ENCODE measurements at regions of chr3 and their contacts with region 1.

Region 1: GRCh38 chr3:128297401-128298138 is 144.3 kb downstream of the EEFSEC start:
- DNase-seq: peak in 3 of 4 donors; percentile 54 to 64 (median 55)
- ATAC-seq: peak; percentile 42
- H3K4me3 ChIP-seq: no peak overlapping the region
- H3K27ac ChIP-seq: no peak overlapping the region
- H3K4me1 ChIP-seq: no peaks in the 10 kb centered on the region
- H3K27me3 ChIP-seq: no peaks in the 10 kb centered on the region
- CTCF ChIP-seq: no peak
- POLR2A ChIP-seq: no peak

Region 2: DNA sequence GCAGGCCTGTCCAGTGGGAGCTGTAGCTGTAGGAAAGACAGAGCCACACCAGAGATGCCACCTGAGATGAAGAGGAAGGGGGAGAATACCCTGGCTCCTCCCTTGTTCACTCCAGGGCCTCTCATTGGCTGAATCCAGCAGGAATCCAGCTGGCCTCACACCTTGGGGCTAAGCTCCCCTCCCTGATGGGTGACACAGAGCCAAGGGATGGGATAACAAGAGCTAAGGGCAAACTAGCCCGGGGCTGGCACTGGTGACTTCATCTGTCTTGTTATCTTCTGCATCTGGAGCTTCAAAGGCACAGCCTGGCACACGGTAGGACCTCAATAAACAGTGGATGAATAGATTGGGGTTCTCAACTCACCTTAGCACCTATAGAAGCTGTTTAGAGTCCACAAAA is 209.2 kb after region 1 on chr3:
- intact Hi-C with region 1: no loop called
- DNase-seq: no peak
- ATAC-seq: no peak
- H3K4me3 ChIP-seq: no peak overlapping the region
- H3K27ac ChIP-seq: no peak overlapping the region
- H3K4me1 ChIP-seq: no peaks in the 10 kb centered on the region
- H3K27me3 ChIP-seq: no peaks in the 10 kb centered on the region
- CTCF ChIP-seq: no peak
- POLR2A ChIP-seq: no peak

Region 3: GRCh38 chr3:128584412-128585020 is 286.9 kb after region 1 on chr3:
- intact Hi-C with region 1: loop called (anchors 10 kb)
- DNase-seq: peak; percentile 76 to 89 (median 85)
- ATAC-seq: peak; percentile 97
- H3K4me3 ChIP-seq: no peak overlapping the region
- H3K27ac ChIP-seq: no peak overlapping the region
- H3K4me1 ChIP-seq: no peaks in the 10 kb centered on the region
- H3K27me3 ChIP-seq: no peaks in the 10 kb centered on the region
- CTCF ChIP-seq: peak; percentile 67 to 94 (median 88)
- POLR2A ChIP-seq: no peak

Region 4: DNA sequence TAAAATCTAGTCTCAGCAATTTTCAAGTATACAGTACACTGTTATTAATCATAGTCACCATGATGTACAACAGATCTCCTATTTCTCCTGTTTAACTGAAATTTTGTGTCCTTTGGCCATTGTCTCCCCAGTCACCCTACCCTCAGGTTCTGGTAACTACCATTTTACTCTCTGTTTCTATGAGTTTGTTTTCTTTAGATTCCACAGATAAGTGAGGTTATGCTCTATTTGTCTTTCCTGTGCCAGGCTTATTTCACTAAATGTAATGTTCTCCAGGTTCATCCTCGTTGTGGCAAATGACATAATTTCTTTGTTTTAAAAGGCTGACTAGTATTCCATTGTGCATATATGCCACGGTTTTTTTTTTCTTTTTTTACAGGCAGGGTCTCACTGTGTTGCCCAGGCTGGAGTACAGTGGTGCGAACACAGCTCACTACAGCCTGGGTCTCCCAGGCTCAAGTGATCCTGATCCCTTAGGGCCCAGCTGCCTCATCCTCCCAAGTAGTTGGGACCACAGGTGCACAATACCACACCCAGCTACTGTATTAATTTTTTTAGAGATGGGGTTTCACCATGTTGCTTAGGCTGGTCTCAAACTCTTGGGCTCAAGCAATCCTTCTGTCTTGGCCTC is 478.5 kb after region 1 on chr3:
- intact Hi-C with region 1: no loop called
- DNase-seq: no peak
- ATAC-seq: no peak
- H3K4me3 ChIP-seq: no peak overlapping the region
- H3K27ac ChIP-seq: no peak overlapping the region
- H3K4me1 ChIP-seq: peaks cover 34% of the 10 kb centered on the region
- H3K27me3 ChIP-seq: no peaks in the 10 kb centered on the region
- CTCF ChIP-seq: no peak
- POLR2A ChIP-seq: no peak

Measured in body of pancreas (tissue), 4 donors.